ENCODE measurements at regions of chr12 and their contacts with region 1.

Region 1: DNA sequence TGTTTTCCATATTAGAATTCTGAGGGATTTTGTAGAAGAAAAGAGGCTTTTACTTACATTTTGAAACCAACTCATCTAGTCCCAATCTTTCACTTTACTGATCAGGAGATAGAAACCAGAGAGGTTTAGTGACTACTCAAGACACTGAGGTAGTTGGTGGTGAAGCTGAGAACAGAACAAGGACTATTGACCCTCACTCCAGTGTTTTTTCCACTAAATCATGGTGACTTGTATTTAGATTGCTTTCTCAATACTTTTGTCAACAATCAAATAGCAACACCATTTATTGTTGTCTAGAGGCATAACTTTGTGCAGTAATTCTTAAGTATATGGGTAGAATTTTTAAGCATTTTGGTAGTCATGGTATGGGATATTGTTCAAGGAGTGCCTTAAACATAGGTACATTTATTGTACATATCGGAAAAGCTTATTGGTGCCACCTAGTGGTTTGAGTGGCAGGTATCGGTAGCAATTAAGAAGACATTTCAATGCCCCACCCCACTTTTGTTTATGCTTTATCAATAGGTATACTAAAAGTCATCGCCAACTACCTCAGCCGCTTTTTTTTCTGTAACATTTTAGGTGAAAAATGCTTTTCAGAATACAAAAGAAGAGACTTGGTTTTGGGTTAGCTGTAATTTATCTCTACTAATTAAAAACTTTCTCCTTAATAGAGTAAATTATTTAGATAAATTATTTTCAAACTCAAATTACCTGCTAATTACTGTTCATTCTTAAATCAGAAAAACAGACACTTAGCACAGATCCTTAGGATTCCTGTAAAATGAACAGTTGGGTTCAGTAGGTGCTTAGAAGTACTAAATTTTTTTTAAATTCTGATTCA is 47.3 kb upstream of the PAWR start:
- DNase-seq: no peak
- ATAC-seq: no peak
- H3K4me3 ChIP-seq: no peak overlapping the region
- H3K27ac ChIP-seq: no peak overlapping the region
- H3K4me1 ChIP-seq: no peaks in the 10 kb centered on the region
- H3K27me3 ChIP-seq: no peaks in the 10 kb centered on the region
- CTCF ChIP-seq: peak in 4 of 5 experiments; percentile 19 to 56 (median 46)
- POLR2A ChIP-seq: no peak

Region 2: GRCh38 chr12:79373896-79374499 is 364.1 kb before region 1 on chr12:
- in situ Hi-C with region 1: no loop called
- intact Hi-C with region 1: no loop called
- DNase-seq: no peak
- ATAC-seq: no peak
- H3K4me3 ChIP-seq: no peak overlapping the region
- H3K27ac ChIP-seq: no peak overlapping the region
- H3K4me1 ChIP-seq: no peaks in the 10 kb centered on the region
- H3K27me3 ChIP-seq: no peaks in the 10 kb centered on the region
- CTCF ChIP-seq: peak in 3 of 5 experiments; percentile 22 to 48 (median 40)
- POLR2A ChIP-seq: no peak

Region 3: DNA sequence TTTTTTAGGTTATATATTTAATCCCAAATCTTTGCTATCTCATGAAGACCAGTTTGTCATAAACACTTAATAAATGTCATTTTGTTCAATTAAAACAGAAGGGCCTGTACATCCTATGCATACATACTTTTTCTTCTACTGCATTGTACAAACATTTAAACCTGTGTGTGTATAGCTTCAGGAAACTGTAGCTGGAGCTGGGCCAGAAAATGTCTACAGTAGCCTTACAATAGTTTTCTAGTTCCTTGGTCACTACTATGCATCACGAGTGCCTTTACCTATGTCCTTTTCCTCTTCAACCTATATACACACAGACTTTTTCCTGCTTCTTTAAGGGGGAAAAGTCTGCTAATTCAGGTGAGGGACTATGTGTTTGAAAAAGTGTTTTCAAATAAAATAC is 350.1 kb before region 1 on chr12:
- in situ Hi-C with region 1: no loop called
- intact Hi-C with region 1: no loop called
- DNase-seq: no peak
- ATAC-seq: no peak
- H3K4me3 ChIP-seq: no peak overlapping the region
- H3K27ac ChIP-seq: no peak overlapping the region
- H3K4me1 ChIP-seq: no peaks in the 10 kb centered on the region
- H3K27me3 ChIP-seq: no peaks in the 10 kb centered on the region
- CTCF ChIP-seq: no peak
- POLR2A ChIP-seq: no peak

Region 4: GRCh38 chr12:79407671-79408622 is 330.1 kb before region 1 on chr12:
- in situ Hi-C with region 1: loop called in 1 of 4 experiments (anchors 25 kb)
- intact Hi-C with region 1: loop called (anchors 10 kb)
- DNase-seq: no peak
- ATAC-seq: no peak
- H3K4me3 ChIP-seq: no peak overlapping the region
- H3K27ac ChIP-seq: no peak overlapping the region
- H3K4me1 ChIP-seq: no peaks in the 10 kb centered on the region
- H3K27me3 ChIP-seq: no peaks in the 10 kb centered on the region
- CTCF ChIP-seq: peak in 2 of 5 experiments; percentile 11 to 27
- POLR2A ChIP-seq: no peak

Region 5: GRCh38 chr12:79782197-79782900 is 44.3 kb after region 1 on chr12:
- in situ Hi-C with region 1: no loop called
- intact Hi-C with region 1: no loop called
- DNase-seq: no peak
- ATAC-seq: no peak
- H3K4me3 ChIP-seq: no peak overlapping the region
- H3K27ac ChIP-seq: no peak overlapping the region
- H3K4me1 ChIP-seq: no peaks in the 10 kb centered on the region
- H3K27me3 ChIP-seq: no peaks in the 10 kb centered on the region
- CTCF ChIP-seq: no peak
- POLR2A ChIP-seq: no peak

Region 6: DNA sequence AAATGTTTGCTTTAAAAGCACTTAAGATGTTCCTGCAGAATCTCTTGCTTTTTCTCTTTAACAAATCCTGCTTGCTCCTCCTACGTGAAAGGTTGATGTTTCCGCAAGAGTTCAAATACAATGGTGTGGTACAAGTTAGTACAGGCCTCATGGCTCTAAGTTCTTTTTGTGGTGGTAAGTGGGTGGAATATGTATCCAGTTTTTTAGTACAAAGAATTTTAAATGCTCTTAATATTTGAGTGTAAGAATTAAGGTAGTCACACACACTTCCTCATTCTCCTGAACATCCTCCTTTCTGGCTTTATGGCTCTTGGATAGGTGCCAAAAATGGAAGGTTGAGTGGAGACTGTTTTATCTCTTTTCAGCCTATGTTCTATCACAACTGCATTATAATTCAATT is 363.0 kb after region 1 on chr12:
- in situ Hi-C with region 1: no loop called
- intact Hi-C with region 1: no loop called
- DNase-seq: no peak
- ATAC-seq: no peak
- H3K4me3 ChIP-seq: no peak overlapping the region
- H3K27ac ChIP-seq: no peak overlapping the region
- H3K4me1 ChIP-seq: no peaks in the 10 kb centered on the region
- H3K27me3 ChIP-seq: no peaks in the 10 kb centered on the region
- CTCF ChIP-seq: no peak
- POLR2A ChIP-seq: no peak